ENCODE measurements at regions of chr3 and their contacts with region 1.

Region 1: GRCh38 chr3:66018057-66019033 is 20.4 kb downstream of the MAGI1 start:
- DNase-seq: no peak

Region 2: GRCh38 chr3:65967451-65967850 is 50.9 kb before region 1 on chr3:
- intact Hi-C with region 1: loop called (anchors 5 kb)
- DNase-seq: no peak

Measured in cardiac septum (tissue), 1 donor.